Kidney (tissue), 22 donors: ENCODE measurements at regions of chr10 and their contacts with region 1.

Region 1: DNA sequence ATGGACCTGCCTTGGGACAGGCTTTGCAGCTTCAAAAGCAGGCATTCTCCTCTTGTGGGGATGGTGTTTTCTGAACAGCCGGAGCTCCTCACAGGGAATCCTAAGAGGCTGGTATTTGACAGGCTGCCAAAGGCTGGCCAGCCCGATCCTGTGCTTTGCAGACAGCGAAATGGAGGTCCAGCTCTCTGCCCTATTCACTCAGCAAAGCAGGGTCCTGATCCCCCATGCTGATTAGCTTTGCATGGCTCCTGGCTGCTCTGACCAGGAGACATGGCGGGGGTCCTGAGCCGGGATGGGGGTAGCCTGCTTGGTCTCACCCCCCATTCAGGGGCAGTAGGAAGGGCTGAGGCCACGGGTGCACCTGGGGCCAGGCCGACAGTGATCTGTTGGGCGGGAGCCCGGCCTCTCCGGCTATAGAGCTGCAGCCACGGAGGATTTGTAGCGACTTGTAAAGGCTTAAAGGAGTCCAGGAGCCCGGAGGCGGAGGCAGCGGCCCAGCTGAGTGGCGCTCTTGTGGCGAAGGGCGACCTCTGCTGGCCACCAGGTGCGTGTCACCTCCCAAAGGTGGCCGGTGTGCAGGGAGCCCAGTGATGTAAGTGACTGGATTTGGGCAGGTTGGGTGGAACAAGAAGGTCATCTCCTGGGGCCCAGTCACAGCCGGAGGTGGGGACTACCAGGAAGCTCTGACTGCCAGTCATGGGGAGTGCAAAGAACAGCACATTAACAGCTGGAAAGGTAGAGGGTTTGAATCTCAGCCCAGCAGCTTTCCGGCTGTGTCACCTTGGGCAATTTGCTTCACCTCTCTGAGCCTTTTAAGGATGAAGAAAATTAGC is 126.5 kb downstream of the ZMIZ1 start:
- DNase-seq: peak; percentile 91 to 94 (median 92)
- H3K4me3 ChIP-seq: peak overlapping the region in 1 of 3 donors; percentile 22
- H3K27ac ChIP-seq: peak overlapping the region; percentile 73 to 80
- H3K4me1 ChIP-seq: peaks cover 0 to 32% (median 14%) of the 10 kb centered on the region in 3 donors
- H3K27me3 ChIP-seq: no peaks in the 10 kb centered on the region
- CTCF ChIP-seq: peak; percentile 97

Region 2: GRCh38 chr10:78047314-78047891 is 1147.9 kb before region 1 on chr10:
- intact Hi-C with region 1: loop called (anchors 10 kb)
- DNase-seq: peak; percentile 89 to 95 (median 95)
- H3K4me3 ChIP-seq: no peak overlapping the region
- H3K27ac ChIP-seq: no peak overlapping the region
- H3K4me1 ChIP-seq: peaks cover 2 to 4% (median 4%) of the 10 kb centered on the region in 3 donors
- H3K27me3 ChIP-seq: no peaks in the 10 kb centered on the region
- CTCF ChIP-seq: peak; percentile 95

Region 3: DNA sequence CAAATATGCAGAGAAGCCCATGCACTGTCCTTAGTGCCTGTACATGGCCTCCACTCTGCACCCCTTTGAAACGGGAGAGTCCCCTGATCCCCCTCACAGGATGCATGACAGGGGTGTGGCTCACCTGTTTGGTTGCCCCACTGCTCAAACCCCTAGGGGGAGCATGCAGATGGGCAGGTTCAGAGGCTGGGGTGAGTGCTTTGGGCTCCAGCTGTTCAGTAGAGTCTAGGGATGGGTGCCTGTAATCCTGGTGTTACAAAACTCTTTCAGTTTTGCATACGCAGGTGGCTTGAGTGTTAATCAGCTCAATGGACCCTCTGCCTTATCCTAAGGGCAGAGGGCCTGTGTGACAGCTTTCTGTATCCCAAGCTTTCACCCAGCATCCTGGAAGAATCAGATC is 407.6 kb after region 1 on chr10:
- intact Hi-C with region 1: no loop called
- DNase-seq: no peak
- H3K4me3 ChIP-seq: no peak overlapping the region
- H3K27ac ChIP-seq: no peak overlapping the region
- H3K4me1 ChIP-seq: no peaks in the 10 kb centered on the region
- H3K27me3 ChIP-seq: no peaks in the 10 kb centered on the region
- CTCF ChIP-seq: no peak